ENCODE measurements at regions of chr18 and their contacts with region 1.

Region 1: DNA sequence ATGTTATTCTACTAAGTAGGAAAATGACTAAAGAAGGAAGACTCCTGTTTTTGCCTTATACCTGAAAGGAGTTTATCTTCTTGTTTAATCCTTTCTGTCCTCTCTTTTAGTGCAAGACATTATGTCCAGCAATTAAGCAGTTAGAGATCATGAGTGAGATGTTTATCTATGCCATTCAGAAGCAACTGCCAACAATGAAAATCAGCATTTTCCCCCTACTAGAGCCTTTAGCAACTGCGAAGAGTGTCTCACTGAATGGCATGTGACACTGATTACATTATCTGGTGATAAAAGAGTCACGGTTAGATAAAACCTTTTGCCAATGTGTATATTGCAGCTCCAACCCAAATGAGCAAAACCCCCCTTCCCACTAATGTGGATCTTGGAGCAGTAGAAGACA is 357.7 kb upstream of the SYT4 start:
- DNase-seq: no peak
- H3K4me3 ChIP-seq: no peak overlapping the region
- H3K27ac ChIP-seq: no peak overlapping the region
- H3K4me1 ChIP-seq: no peaks in the 10 kb centered on the region
- H3K27me3 ChIP-seq: no peaks in the 10 kb centered on the region

Region 2: DNA sequence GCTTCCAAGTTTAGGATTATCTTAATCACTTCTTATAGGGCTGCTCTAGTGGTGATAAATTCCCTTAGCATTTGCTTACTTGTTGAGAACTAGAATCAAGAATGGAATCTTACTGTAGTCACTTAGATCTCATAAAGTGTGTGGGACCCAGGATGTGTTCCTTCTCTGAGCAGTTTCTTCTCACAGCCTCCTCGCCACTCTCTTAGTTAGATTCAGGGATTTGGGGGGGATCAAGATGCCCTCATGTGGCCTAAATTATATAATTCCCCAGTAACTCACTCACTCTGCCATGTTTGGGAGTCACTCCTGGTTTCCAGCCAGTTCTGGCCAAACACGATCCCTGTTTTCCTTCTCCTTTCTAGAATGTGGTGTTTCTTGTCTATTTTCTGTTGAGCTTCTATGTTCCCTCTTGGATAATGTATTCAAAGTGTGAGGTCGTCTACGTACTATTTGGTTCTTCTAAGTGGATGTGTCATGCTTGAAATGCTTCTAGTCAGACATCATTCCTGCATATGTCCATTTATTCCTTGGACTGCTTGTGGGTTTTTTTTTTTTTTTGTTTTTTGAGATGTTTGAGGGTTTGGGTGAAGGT is 57.2 kb after region 1 on chr18:
- in situ Hi-C with region 1: no loop called
- DNase-seq: peak; percentile 29
- H3K4me3 ChIP-seq: no peak overlapping the region
- H3K27ac ChIP-seq: no peak overlapping the region
- H3K4me1 ChIP-seq: no peaks in the 10 kb centered on the region
- H3K27me3 ChIP-seq: no peaks in the 10 kb centered on the region

Region 3: DNA sequence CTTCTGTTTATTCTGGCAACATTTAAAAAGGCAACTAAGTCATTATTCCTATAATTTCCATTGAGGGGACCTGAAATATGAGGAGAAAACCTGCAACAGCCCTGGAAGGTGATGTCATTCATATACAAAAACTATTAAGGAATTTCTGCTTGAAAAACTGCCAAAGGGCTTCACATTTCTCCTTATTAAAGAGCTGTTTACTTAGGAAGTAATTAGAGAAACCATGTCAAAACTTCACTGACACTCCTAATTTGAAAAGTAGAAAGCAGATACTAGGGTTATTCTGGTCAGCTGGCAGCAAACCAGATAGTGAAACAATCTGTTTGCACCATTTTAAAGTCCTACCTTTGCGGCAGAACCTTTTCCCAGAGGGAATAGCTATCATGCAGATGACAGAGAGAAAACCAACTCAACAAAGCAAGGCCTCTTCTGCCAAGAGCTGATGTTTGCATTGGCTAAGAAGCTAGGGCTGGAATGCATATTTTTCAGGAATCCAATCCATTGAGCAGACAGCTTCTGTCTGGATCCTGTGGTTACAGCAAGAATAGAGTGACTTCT is 234.5 kb after region 1 on chr18:
- in situ Hi-C with region 1: no loop called
- DNase-seq: peak; percentile 63
- H3K4me3 ChIP-seq: no peak overlapping the region
- H3K27ac ChIP-seq: no peak overlapping the region
- H3K4me1 ChIP-seq: peaks cover 15% of the 10 kb centered on the region
- H3K27me3 ChIP-seq: no peaks in the 10 kb centered on the region

Region 4: DNA sequence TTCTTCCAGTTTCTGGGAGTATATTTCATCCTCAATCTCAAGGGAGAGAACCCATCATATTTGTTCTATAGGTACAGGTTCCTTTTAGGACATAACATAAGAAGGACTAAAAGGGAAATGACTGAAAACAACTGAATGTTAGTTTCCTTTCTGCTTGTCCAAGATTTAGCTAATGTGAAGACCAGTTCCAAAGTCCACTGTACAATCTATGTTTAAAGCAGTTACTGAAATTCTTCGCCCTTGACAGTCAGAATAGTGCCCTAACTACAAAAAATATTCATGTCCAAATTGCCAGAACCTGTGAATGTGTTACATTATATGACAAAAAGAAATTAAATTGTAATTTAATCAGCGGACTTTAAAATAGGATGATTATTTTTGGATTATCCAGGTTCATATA is 579.4 kb after region 1 on chr18:
- in situ Hi-C with region 1: loop called (anchors 10 kb)
- DNase-seq: no peak
- H3K4me3 ChIP-seq: no peak overlapping the region
- H3K27ac ChIP-seq: no peak overlapping the region
- H3K4me1 ChIP-seq: no peaks in the 10 kb centered on the region
- H3K27me3 ChIP-seq: no peaks in the 10 kb centered on the region; the same call in 1 of the 2 replicates

Measured in GM23248 (cell line).